HEK293 (cell line): ENCODE measurements at regions of chr6 and their contacts with region 1.

Region 1: GRCh38 chr6:1609648-1610496 is at the start of gene FOXC1:
- H3K4me3 ChIP-seq: peak within 1 kb of the TSS; percentile 59
- H3K27ac ChIP-seq: peak within 1 kb of the TSS; percentile 100
- H3K4me1 ChIP-seq: peaks cover 2% of the 10 kb centered on the region; the same call in 1 of the 2 replicates
- CTCF ChIP-seq: no peak

Region 2: GRCh38 chr6:1581120-1581991 is 28.5 kb before region 1 on chr6:
- CTCF ChIA-PET with region 1: no interaction called
- POLR2A ChIA-PET with region 1: no interaction called
- H3K4me3 ChIP-seq: no peak overlapping the region
- H3K27ac ChIP-seq: no peak overlapping the region
- H3K4me1 ChIP-seq: no peaks in the 10 kb centered on the region
- CTCF ChIP-seq: no peak

Region 3: GRCh38 chr6:1624851-1625781 is 15.2 kb after region 1 on chr6:
- CTCF ChIA-PET with region 1: interaction called, 5 read pairs
- POLR2A ChIA-PET with region 1: interaction called, 32 read pairs
- H3K4me3 ChIP-seq: peak overlapping the region; percentile 38
- H3K27ac ChIP-seq: peak overlapping the region; percentile 85; the same call in 1 of the 2 replicates
- H3K4me1 ChIP-seq: peaks cover 40% of the 10 kb centered on the region
- CTCF ChIP-seq: peak; percentile 19; the same call in 1 of the 2 replicates

Region 4: DNA sequence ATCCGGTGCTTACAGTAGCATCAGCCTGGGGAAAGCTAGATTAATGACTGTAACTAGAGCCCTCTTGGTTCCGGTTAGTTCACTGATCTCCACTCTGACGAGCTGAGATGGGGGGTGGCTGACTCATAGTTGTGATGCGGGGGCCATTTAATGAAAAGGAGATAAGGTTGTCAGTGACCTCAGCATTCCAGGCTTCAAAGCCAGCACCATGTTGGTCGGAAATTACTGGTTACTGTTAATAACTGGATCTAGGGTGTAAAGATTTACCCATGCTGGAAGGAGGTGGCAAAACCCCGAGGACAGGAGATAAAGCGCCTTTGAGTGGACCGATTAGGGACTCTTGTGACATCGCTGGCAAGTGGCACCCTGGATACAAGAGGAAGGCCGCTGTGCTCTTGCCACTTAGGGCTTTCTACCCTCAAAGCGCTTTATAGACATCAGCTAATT is 20.9 kb after region 1 on chr6:
- CTCF ChIA-PET with region 1: interaction called, 5 read pairs
- POLR2A ChIA-PET with region 1: interaction called, 32 read pairs
- H3K4me3 ChIP-seq: no peak overlapping the region
- H3K27ac ChIP-seq: peak overlapping the region; percentile 68
- H3K4me1 ChIP-seq: peaks cover 36% of the 10 kb centered on the region
- CTCF ChIP-seq: no peak

Region 5: DNA sequence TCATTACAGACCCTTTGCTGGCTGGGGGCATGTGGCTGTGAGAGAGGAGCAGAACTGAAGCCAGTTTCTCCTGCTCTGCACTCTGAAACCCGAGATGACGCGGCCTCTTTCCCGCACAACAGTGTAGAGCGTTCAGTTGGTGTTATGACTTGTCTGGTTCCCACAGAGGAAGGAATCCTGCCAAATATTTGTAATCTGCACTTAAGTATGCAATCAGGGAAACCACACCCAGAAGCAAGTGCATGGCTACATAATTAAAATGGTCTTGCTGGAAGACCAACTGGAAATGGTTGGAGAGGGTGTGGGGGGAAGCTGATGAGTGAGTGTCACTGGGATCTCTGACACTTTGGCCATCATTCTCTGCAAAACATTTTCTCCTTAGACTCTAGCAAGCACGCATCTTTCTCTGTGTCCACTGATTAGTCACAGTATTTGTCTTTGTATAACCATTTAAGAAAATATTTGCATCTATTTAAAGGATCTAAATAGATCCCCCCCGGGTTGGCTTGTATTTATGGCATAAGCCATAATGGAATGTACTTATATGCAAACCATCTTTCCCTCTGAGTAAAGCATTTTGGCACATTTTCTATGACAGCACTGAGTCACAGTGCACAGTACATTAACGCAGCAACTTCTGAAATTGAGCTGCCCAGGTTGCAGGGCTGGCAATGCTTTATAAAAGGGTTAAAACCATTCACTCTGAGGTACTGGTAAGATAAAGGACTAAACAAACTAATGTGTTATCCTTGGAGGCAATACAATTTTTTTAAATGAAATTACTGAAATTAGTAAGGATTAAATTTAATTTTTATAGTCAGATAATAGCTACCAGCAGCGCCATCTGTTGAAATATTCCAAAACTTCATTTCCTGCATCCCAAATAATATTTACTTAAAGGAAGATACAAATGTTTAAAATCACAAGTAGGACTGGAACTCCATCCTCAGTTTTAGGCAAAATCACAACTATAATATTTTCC is 76.5 kb after region 1 on chr6:
- CTCF ChIA-PET with region 1: interaction called, 7 read pairs
- POLR2A ChIA-PET with region 1: interaction called, 10 read pairs
- H3K4me3 ChIP-seq: no peak overlapping the region
- H3K27ac ChIP-seq: peak overlapping the region; percentile 76
- H3K4me1 ChIP-seq: peaks cover 18% of the 10 kb centered on the region
- CTCF ChIP-seq: no peak; the same call in 1 of the 2 replicates